CD8-positive, alpha-beta T cell (primary cell): ENCODE measurements at regions of chr1 and their contacts with region 1.

Region 1: GRCh38 chr1:226407497-226408284 is at the start of gene PARP1:
- DNase-seq: peak; percentile 78 to 94 (median 86)
- ATAC-seq: peak; percentile 87
- H3K4me3 ChIP-seq: peak within 1 kb of the TSS; percentile 68 to 92
- H3K4me3 Mint-ChIP-seq: peak within 1 kb of the TSS; percentile 94
- H3K27ac ChIP-seq: peak within 1 kb of the TSS; percentile 64 to 65
- H3K27ac Mint-ChIP-seq: peak within 1 kb of the TSS; percentile 90
- H3K4me1 ChIP-seq: peaks cover 45% of the 10 kb centered on the region
- H3K4me1 Mint-ChIP-seq: peaks cover 46% of the 10 kb centered on the region
- H3K27me3 ChIP-seq: no peaks in the 10 kb centered on the region
- H3K27me3 Mint-ChIP-seq: no peaks in the 10 kb centered on the region
- CTCF ChIP-seq: peak; percentile 73
- total RNA-seq, gene PARP1: 38.6 to 46.2 TPM

Region 2: GRCh38 chr1:225467193-225468020 is 940.3 kb before region 1 on chr1:
- CTCF ChIA-PET with region 1: no interaction called
- POLR2A ChIA-PET with region 1: no interaction called
- intact Hi-C with region 1: loop called in 1 of 2 experiments (anchors 5 kb)
- DNase-seq: peak; percentile 67 to 93 (median 86)
- ATAC-seq: peak; percentile 81
- H3K4me3 ChIP-seq: peak overlapping the region; percentile 60 to 86
- H3K4me3 Mint-ChIP-seq: peak overlapping the region; percentile 92
- H3K27ac ChIP-seq: peak overlapping the region; percentile 88 to 95
- H3K27ac Mint-ChIP-seq: peak overlapping the region; percentile 98
- H3K4me1 ChIP-seq: peaks cover 35% of the 10 kb centered on the region
- H3K4me1 Mint-ChIP-seq: peaks cover 43% of the 10 kb centered on the region
- H3K27me3 ChIP-seq: no peaks in the 10 kb centered on the region
- H3K27me3 Mint-ChIP-seq: no peaks in the 10 kb centered on the region
- CTCF ChIP-seq: no peak

Region 3: DNA sequence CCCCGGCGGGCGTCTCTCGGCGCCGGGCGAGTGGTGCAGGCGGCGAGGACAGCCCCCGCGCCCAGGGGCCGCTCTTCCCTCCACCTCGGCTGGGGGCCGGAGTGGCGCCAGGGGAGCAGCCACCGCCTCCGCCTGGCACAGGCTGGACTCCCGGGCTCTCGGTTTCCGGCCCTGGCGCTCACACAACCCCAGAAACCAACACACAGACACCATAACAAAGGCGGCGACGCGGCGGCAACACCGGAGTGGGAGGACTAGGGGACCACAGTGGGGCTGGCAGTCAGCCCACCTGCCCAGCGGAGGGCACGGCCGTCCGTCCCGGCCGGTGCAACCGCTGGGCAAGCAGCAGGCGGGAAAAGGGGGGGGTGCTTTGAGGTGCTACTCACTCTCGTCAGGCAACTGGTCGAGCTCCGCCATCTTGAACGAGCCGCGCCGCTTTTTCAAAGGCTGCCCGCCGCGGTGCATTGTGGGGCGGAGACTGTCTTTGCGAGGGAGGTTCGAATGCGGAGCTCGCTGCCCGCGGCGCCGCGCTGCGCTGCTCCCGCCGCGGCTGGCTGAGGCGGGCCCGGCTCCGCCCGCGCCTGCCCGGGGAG is 98.9 kb before region 1 on chr1 and contains the start of gene LIN9:
- CTCF ChIA-PET with region 1: no interaction called
- POLR2A ChIA-PET with region 1: interaction called, 5 read pairs
- intact Hi-C with region 1: loop called (anchors 1 to 5 kb)
- DNase-seq: peak; percentile 82 to 94 (median 91)
- ATAC-seq: peak; percentile 90
- H3K4me3 ChIP-seq: peak within 1 kb of the TSS; percentile 91 to 99
- H3K4me3 Mint-ChIP-seq: peak within 1 kb of the TSS; percentile 95
- H3K27ac ChIP-seq: peak within 1 kb of the TSS; percentile 49 to 56
- H3K27ac Mint-ChIP-seq: peak within 1 kb of the TSS; percentile 86
- H3K4me1 ChIP-seq: peaks cover 14% of the 10 kb centered on the region
- H3K4me1 Mint-ChIP-seq: peaks cover 22% of the 10 kb centered on the region
- H3K27me3 ChIP-seq: peaks cover 0 to 8% of the 10 kb centered on the region in 2 experiments
- H3K27me3 Mint-ChIP-seq: peaks cover 8% of the 10 kb centered on the region
- CTCF ChIP-seq: no peak
- total RNA-seq, gene LIN9: 1.1 to 1.3 TPM

Region 4: GRCh38 chr1:226424228-226425003 is 16.7 kb after region 1 on chr1:
- CTCF ChIA-PET with region 1: interaction called, 54 read pairs
- POLR2A ChIA-PET with region 1: interaction called, 17 read pairs
- intact Hi-C with region 1: no loop called
- DNase-seq: peak in 3 of 9 experiments; percentile 21 to 75 (median 59)
- ATAC-seq: peak; percentile 54
- H3K4me3 ChIP-seq: no peak overlapping the region
- H3K4me3 Mint-ChIP-seq: no peak overlapping the region
- H3K27ac ChIP-seq: peak overlapping the region in 1 of 2 experiments; percentile 47
- H3K27ac Mint-ChIP-seq: no peak overlapping the region
- H3K4me1 ChIP-seq: peaks cover 27% of the 10 kb centered on the region
- H3K4me1 Mint-ChIP-seq: peaks cover 35% of the 10 kb centered on the region
- H3K27me3 ChIP-seq: no peaks in the 10 kb centered on the region
- H3K27me3 Mint-ChIP-seq: no peaks in the 10 kb centered on the region
- CTCF ChIP-seq: peak; percentile 47

Region 5: DNA sequence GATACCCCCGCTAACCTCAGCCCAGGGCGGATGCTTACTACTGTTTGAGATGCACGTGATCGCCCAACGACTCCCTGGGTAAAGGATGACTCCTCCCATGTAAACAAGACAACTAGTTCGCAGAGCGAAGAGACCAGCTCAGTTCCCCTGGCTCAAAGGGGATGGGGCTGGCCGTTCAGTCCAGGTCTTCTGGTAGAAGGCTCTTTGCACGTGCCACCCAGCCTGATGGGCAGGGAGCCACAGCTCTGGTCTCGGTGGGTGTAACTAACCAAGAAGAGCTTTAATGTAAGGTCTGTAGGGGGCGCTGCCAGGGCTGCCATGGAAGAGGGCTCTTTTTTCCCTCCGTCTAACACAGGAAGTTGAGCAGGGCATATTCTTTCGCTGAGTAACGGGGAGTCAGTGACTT is 49.6 kb after region 1 on chr1:
- CTCF ChIA-PET with region 1: interaction called, 14 read pairs
- POLR2A ChIA-PET with region 1: interaction called, 3 read pairs
- intact Hi-C with region 1: no loop called
- DNase-seq: peak; percentile 9 to 79 (median 60)
- ATAC-seq: peak; percentile 89
- H3K4me3 ChIP-seq: peak overlapping the region; percentile 25 to 56
- H3K4me3 Mint-ChIP-seq: peak overlapping the region; percentile 84
- H3K27ac ChIP-seq: no peak overlapping the region
- H3K27ac Mint-ChIP-seq: peak overlapping the region; percentile 77
- H3K4me1 ChIP-seq: peaks cover 17% of the 10 kb centered on the region
- H3K4me1 Mint-ChIP-seq: peaks cover 15% of the 10 kb centered on the region
- H3K27me3 ChIP-seq: no peaks in the 10 kb centered on the region
- H3K27me3 Mint-ChIP-seq: no peaks in the 10 kb centered on the region
- CTCF ChIP-seq: peak; percentile 51

Region 6: DNA sequence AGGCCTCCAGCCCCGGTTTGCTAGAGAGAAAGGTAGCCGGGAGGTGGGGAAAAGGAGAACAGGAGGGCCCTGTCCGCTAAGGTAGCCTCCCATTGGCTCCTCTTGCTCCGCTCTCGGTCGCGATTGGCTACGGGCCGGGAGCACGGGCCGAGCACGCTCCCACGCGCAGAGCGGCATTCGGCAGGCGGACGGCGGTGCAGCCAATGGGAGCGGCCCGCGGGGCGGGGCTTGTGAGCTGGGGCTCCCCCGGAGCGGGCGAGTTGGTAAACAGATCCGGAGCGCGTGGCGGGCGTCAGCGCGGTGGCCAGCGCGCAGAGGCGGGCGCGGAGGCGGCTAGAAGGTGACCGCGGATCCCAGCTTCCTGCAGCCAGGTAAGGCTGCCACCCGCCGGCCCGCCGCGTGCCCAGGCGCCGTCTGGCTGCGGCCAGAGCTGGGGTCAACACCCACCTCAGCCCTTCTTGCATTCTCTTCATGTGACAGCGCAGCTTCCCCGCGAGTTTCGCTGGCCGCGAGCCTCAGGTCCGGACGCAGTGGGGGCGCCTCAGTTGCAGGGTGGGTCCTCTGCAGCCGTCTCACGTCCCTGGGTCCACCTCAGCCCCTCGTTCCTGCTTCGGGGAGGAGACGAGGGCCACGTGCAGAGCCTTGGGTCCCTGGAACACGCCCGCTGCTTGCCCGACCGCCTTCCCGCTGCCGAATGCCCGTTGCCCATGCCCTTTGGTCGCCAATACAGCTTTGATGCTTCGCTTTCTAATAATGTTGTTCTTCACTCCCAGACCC is 532.5 kb after region 1 on chr1 and contains the start of gene COQ8A:
- CTCF ChIA-PET with region 1: no interaction called
- POLR2A ChIA-PET with region 1: interaction called, 11 read pairs
- intact Hi-C with region 1: loop called (anchors 1 to 5 kb)
- DNase-seq: peak; percentile 97 to 100 (median 99)
- ATAC-seq: peak; percentile 90
- H3K4me3 ChIP-seq: peak within 1 kb of the TSS; percentile 92 to 93
- H3K4me3 Mint-ChIP-seq: peak within 1 kb of the TSS; percentile 88
- H3K27ac ChIP-seq: peak within 1 kb of the TSS; percentile 93 to 97
- H3K27ac Mint-ChIP-seq: peak within 1 kb of the TSS; percentile 97
- H3K4me1 ChIP-seq: peaks cover 38% of the 10 kb centered on the region
- H3K4me1 Mint-ChIP-seq: peaks cover 49% of the 10 kb centered on the region
- H3K27me3 ChIP-seq: no peaks in the 10 kb centered on the region
- H3K27me3 Mint-ChIP-seq: no peaks in the 10 kb centered on the region
- CTCF ChIP-seq: no peak
- total RNA-seq, gene COQ8A: 82.6 to 90.0 TPM